Adrenal gland (tissue), 19 donors: ENCODE measurements at regions of chr20 and their contacts with region 1.

Region 1: GRCh38 chr20:63707549-63708300 is at the starts of genes ARFRP1 and ZGPAT:
- DNase-seq: peak; percentile 87 to 93 (median 89)
- H3K4me3 ChIP-seq: peak within 1 kb of the TSS; percentile 79 to 95 (median 88)
- H3K27ac ChIP-seq: peak within 1 kb of the TSS; percentile 80 to 93 (median 90)
- H3K4me1 ChIP-seq: peaks cover 19 to 22% of the 10 kb centered on the region in 2 donors
- H3K27me3 ChIP-seq: no peaks in the 10 kb centered on the region
- CTCF ChIP-seq: no peak
- POLR2A ChIP-seq: peak; percentile 13 to 49
- total RNA-seq, gene ARFRP1: 31.7 to 63.8 (median 42.0) TPM
- total RNA-seq, gene ZGPAT: 20.9 to 56.2 (median 31.0) TPM

Region 2: DNA sequence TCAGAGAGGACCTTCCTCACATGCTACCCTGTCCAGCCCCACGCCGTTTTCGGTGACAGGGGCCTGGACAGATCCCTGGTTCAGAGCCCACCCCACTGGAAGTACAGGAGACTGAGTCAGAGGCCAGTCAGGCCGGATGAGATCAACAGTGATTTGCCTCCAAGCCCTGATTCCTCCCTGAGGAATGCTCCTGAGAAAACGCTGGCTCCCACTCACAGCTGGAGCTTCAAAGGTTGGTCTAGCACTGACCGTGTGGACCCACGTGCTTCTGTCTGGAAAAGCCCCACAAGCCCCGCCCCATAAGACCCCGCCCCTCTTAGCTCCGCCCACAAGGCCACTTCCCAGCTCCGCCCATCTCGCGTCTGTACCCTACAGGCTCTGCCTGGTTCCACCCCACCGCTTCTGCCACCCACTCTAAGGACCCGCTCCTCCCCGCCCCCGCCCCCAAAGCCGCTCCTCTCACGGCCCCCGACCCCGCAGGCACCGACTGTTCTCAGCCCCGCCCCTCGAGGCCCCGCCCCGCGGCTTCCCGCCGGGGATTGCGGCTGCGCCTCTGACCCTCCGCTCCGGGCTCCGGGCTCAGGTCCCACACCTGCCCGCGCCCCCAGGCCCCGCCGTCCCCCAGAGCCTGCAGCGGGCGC is 636.1 kb before region 1 on chr20:
- intact Hi-C with region 1: no loop called
- DNase-seq: no peak
- H3K4me3 ChIP-seq: no peak overlapping the region
- H3K27ac ChIP-seq: no peak overlapping the region
- H3K4me1 ChIP-seq: peaks cover 0 to 4% of the 10 kb centered on the region in 2 donors
- H3K27me3 ChIP-seq: peaks cover 24% of the 10 kb centered on the region
- CTCF ChIP-seq: no peak
- POLR2A ChIP-seq: no peak

Region 3: DNA sequence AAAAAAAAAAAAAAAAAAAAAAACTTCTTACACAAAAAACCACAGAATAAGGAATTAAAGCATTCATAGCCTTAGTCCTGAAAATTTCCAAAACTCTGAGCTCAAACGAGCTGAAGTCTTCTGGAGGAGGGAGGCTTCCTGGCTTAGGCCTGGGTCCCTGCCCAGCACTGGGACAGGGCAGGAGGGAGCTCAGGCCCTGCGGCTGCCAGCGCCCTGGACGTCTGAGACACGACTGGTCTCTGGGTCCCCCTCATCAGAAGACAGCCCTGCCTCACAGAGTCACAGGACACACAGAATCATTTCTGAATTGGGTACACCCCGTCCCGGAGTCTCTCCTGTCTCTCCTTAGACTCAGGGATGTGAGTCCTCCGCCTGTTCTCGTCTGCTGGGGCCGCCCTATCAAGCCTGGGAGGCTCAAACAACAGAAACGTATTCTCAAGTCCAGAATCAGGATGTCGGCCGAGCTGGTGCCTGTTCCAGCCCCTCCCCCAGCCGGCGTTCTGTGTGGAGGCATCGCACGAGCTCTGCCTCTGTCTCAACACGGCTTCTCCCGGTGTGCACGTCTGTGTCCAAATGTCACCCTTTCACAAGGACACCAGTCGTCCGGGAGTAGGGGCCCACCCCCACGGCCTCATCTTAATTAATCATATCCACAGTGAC is 83.9 kb after region 1 on chr20:
- intact Hi-C with region 1: no loop called
- DNase-seq: peak in 4 of 7 donors; percentile 31 to 62 (median 44)
- H3K4me3 ChIP-seq: no peak overlapping the region
- H3K27ac ChIP-seq: peak overlapping the region in 2 of 5 donors; percentile 60 to 79
- H3K4me1 ChIP-seq: peaks cover 0 to 10% of the 10 kb centered on the region in 2 donors
- H3K27me3 ChIP-seq: no peaks in the 10 kb centered on the region
- CTCF ChIP-seq: no peak
- POLR2A ChIP-seq: no peak

Region 4: GRCh38 chr20:63858393-63859165 is 150.9 kb after region 1 on chr20:
- intact Hi-C with region 1: loop called in 1 of 2 experiments (anchors 10 kb)
- DNase-seq: peak in 6 of 7 donors; percentile 41 to 73 (median 62)
- H3K4me3 ChIP-seq: no peak overlapping the region
- H3K27ac ChIP-seq: peak overlapping the region in 4 of 5 donors; percentile 17 to 82 (median 46)
- H3K4me1 ChIP-seq: peaks cover 51 to 56% of the 10 kb centered on the region in 2 donors
- H3K27me3 ChIP-seq: no peaks in the 10 kb centered on the region
- CTCF ChIP-seq: peak in 3 of 6 experiments; percentile 22 to 32 (median 23)
- POLR2A ChIP-seq: no peak